Cardiac septum (tissue), 1 donor: ENCODE measurements at regions of chr2 and their contacts with region 1.

Region 1: GRCh38 chr2:208254871-208255556 is at the start of gene IDH1:
- DNase-seq: peak; percentile 99
- total RNA-seq, gene IDH1: 17.7 TPM

Region 2: DNA sequence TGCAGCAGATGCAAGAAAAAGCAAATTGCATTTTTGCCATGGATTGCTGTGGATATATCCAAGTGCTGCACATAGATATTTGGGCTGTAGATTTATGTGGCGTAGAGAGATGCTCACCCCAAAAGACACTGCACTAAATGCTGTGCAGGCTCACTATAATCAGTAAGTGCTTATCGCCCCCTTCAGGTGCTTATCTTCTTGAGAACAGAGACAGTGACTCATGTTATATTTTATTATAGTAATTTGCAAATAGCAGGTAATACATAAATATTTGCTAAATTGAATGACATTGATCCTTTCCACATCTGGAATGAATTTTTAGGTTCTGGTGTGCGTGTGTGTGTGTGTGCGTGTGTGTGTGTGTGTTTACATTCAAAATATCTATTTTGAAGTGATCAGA is 192.9 kb before region 1 on chr2:
- intact Hi-C with region 1: no loop called
- DNase-seq: no peak

Region 3: GRCh38 chr2:208148803-208149202 is 106.2 kb before region 1 on chr2:
- intact Hi-C with region 1: no loop called
- DNase-seq: no peak

Region 4: GRCh38 chr2:208175069-208175839 is 79.8 kb before region 1 on chr2:
- intact Hi-C with region 1: loop called (anchors 1 kb)
- DNase-seq: peak; percentile 80

Region 5: GRCh38 chr2:208265801-208266552 is 11.0 kb after region 1 on chr2 and contains the start of gene PIKFYVE:
- intact Hi-C with region 1: loop called (anchors 1 kb)
- DNase-seq: peak; percentile 96
- total RNA-seq, gene PIKFYVE: 20.2 TPM

Region 6: GRCh38 chr2:208315081-208315788 is 60.2 kb after region 1 on chr2:
- intact Hi-C with region 1: loop called (anchors 5 kb)
- DNase-seq: no peak

Region 7: DNA sequence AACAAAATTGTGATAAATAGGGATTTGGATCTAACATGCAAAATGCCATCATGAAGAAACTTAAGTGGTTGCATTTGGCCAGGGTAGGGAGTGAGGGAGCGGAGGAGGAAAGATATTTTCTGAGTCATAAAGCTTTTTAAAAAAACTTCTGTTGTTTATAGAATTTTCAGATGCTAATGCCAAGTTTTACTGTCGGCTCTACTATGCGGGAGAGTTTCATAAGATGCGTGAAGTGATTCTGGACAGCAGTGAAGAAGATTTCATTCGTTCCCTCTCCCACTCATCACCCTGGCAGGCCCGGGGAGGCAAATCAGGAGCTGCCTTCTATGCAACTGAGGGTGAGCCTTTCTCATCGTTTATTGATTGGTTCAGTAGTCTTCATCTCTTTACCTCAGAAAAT is 95.6 kb after region 1 on chr2:
- intact Hi-C with region 1: no loop called
- DNase-seq: no peak